H1 (cell line): ENCODE measurements at regions of chr5 and their contacts with region 1.

Region 1: GRCh38 chr5:132473019-132473531 is 17.5 kb downstream of the IRF1 start:
- DNase-seq: no peak
- H3K4me3 ChIP-seq: no peak overlapping the region
- H3K27ac ChIP-seq: no peak overlapping the region
- H3K4me1 ChIP-seq: peaks cover 0 to 10% (median 0%) of the 10 kb centered on the region in 4 experiments; a peak in 2 of 7 replicates
- H3K27me3 ChIP-seq: no peaks in the 10 kb centered on the region
- CTCF ChIP-seq: no peak
- EP300 ChIP-seq: no peak
- POLR2A ChIP-seq: no peak
- RAD21 ChIP-seq: no peak

Region 2: GRCh38 chr5:132027027-132027426 is 446.0 kb before region 1 on chr5:
- CTCF ChIA-PET with region 1: no interaction called
- POLR2A ChIA-PET with region 1: no interaction called
- DNase-seq: no peak
- H3K4me3 ChIP-seq: no peak overlapping the region
- H3K27ac ChIP-seq: no peak overlapping the region
- H3K4me1 ChIP-seq: no peaks in the 10 kb centered on the region
- H3K27me3 ChIP-seq: no peaks in the 10 kb centered on the region
- CTCF ChIP-seq: no peak
- EP300 ChIP-seq: no peak
- POLR2A ChIP-seq: no peak
- RAD21 ChIP-seq: no peak

Region 3: DNA sequence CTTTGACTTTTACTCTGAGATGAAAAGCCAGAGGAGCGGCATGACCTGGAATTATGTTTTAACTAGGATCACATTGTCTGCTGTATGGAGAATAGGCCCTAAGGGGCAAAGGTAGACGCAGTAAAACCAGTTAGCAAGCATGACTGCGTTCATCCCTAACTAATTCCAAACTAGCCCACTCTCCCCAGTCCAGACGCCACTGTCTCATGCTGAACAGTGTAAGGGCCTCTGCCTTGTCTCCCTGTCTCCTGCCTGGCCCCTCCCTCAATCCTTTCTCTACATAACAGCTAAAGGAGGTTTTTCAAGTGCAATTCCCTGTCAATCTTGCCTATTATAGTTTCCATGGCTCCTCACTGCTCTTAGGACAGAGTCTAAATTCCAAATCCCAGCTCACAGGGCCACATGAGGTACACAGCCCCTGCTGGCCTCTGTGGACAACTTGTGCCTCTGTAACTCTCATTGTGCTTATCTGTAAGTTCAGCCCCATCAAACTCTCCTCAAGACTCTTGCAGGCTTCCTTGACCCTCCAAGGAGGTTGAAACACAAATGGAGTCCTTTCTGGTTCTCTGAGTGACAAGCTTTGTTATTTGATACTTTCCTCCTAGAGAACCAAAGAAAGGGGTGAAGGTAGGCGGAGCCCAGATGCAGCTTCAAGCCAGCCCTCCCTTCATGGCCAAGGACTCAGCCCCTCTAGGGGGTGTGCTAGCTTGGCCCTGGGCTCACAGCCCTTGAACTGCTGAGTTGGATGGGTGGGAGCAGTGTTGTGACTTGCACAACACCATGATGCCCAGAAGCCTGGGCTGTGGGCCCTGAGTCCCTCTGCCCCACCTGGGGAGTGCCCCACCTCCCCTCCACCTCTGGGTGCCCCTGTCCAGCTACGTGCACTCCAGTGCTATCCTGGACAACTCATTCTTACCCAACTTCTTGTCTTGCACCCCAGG is 194.8 kb before region 1 on chr5:
- CTCF ChIA-PET with region 1: no interaction called
- POLR2A ChIA-PET with region 1: no interaction called
- DNase-seq: no peak
- H3K4me3 ChIP-seq: no peak overlapping the region; a peak in 1 of 8 replicates
- H3K27ac ChIP-seq: no peak overlapping the region
- H3K4me1 ChIP-seq: peaks cover 0 to 10% (median 5%) of the 10 kb centered on the region in 4 experiments; a peak in 4 of 7 replicates
- H3K27me3 ChIP-seq: no peaks in the 10 kb centered on the region
- CTCF ChIP-seq: no peak
- EP300 ChIP-seq: no peak
- POLR2A ChIP-seq: no peak
- RAD21 ChIP-seq: no peak

Region 4: DNA sequence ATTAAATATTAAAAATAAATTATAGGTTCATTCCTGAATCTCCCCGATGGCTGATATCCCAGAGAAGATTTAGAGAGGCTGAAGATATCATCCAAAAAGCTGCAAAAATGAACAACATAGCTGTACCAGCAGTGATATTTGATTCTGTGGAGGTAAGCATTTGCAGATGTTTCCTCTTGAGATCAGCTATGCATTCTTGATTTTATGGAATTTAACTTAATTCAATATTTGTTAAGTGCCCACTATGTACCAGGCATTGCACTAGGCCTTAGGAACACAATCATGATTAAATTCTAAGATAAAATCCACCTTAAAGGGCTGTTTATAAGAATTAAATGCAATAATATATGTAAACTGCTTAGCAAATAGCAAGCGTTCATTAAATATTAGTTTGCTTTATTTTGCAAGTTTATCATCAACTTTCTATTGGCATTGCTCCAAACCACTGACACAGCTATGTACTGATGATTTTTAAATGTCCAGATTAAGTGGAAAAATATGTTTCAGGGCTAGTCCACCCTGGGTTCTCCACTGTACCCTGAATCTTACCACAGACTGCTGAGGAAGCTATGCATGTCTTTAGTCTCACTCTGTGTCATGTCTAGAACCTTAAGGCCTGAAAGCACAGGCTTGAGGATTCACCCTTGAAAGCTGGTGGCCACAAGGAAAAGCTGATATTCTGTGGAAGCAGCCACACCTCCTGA is 145.7 kb before region 1 on chr5:
- CTCF ChIA-PET with region 1: no interaction called
- POLR2A ChIA-PET with region 1: no interaction called
- DNase-seq: no peak
- H3K4me3 ChIP-seq: no peak overlapping the region
- H3K27ac ChIP-seq: no peak overlapping the region
- H3K4me1 ChIP-seq: peaks cover 3 to 5% (median 4%) of the 10 kb centered on the region in 4 experiments; a peak in 5 of 7 replicates
- H3K27me3 ChIP-seq: no peaks in the 10 kb centered on the region
- CTCF ChIP-seq: no peak
- EP300 ChIP-seq: no peak
- POLR2A ChIP-seq: no peak
- RAD21 ChIP-seq: no peak

Region 5: GRCh38 chr5:132419502-132420468 is 53.3 kb before region 1 on chr5:
- CTCF ChIA-PET with region 1: interaction called, 12 read pairs
- POLR2A ChIA-PET with region 1: no interaction called
- DNase-seq: peak in 1 of 2 experiments; percentile 84
- H3K4me3 ChIP-seq: no peak overlapping the region
- H3K27ac ChIP-seq: no peak overlapping the region
- H3K4me1 ChIP-seq: peaks cover 0 to 2% (median 1%) of the 10 kb centered on the region in 4 experiments; a peak in 2 of 7 replicates
- H3K27me3 ChIP-seq: no peaks in the 10 kb centered on the region
- CTCF ChIP-seq: peak; percentile 64 to 92 (median 83)
- EP300 ChIP-seq: 0 out of 3 replicates have a peak, but pooled peaks of 1 of the 2 experiments have one; percentile 15
- POLR2A ChIP-seq: no peak
- RAD21 ChIP-seq: peak; percentile 78 to 86

Region 6: GRCh38 chr5:132456296-132457001 is 16.6 kb before region 1 on chr5:
- CTCF ChIA-PET with region 1: interaction called, 33 read pairs
- POLR2A ChIA-PET with region 1: interaction called, 7 read pairs
- DNase-seq: no peak
- H3K4me3 ChIP-seq: no peak overlapping the region
- H3K27ac ChIP-seq: no peak overlapping the region
- H3K4me1 ChIP-seq: peaks cover 1 to 17% (median 5%) of the 10 kb centered on the region in 4 experiments; a peak in 6 of 7 replicates
- H3K27me3 ChIP-seq: peaks cover 0 to 1% (median 0%) of the 10 kb centered on the region in 4 experiments; a peak in 1 of 7 replicates
- CTCF ChIP-seq: no peak
- EP300 ChIP-seq: no peak
- POLR2A ChIP-seq: no peak
- RAD21 ChIP-seq: no peak

Region 7: DNA sequence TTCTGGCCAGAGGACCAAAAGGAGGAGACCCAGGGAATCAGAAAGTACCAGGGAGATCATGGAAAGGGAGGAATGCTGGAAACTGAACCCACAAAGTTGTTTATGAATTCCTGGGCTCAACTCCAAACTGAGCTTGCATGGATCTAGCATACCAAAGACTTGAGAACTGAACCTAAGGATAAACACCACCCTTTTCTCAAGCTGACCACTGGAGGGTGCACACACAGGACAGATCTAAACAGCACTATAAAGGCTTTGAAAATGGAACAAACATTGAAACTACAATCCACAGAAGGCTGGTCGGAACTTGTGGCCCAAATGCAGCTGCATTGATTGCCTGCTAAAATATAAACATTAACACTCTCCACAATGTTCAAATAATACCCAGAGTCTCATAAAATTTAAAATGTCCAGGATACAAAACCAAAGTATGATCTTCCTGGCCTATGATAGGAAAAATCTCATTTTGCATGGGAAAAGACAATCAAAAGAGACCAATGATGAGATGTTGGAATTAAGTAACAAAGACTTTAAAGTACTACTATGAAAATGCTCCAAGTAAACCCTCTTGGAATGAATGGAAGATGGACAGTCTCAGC is 33.1 kb after region 1 on chr5:
- CTCF ChIA-PET with region 1: interaction called, 77 read pairs
- POLR2A ChIA-PET with region 1: no interaction called
- DNase-seq: no peak
- H3K4me3 ChIP-seq: no peak overlapping the region
- H3K27ac ChIP-seq: no peak overlapping the region
- H3K4me1 ChIP-seq: peaks cover 0 to 2% (median 0%) of the 10 kb centered on the region in 4 experiments; a peak in 2 of 7 replicates
- H3K27me3 ChIP-seq: no peaks in the 10 kb centered on the region
- CTCF ChIP-seq: peak in 2 of 3 experiments; percentile 47 to 60; a peak in 3 of 4 replicates
- EP300 ChIP-seq: no peak
- POLR2A ChIP-seq: no peak
- RAD21 ChIP-seq: peak; percentile 28 to 54; a peak in 3 of 4 replicates